Testis (tissue), 5 donors: ENCODE measurements at regions of chr14 and their contacts with region 1.

Region 1: DNA sequence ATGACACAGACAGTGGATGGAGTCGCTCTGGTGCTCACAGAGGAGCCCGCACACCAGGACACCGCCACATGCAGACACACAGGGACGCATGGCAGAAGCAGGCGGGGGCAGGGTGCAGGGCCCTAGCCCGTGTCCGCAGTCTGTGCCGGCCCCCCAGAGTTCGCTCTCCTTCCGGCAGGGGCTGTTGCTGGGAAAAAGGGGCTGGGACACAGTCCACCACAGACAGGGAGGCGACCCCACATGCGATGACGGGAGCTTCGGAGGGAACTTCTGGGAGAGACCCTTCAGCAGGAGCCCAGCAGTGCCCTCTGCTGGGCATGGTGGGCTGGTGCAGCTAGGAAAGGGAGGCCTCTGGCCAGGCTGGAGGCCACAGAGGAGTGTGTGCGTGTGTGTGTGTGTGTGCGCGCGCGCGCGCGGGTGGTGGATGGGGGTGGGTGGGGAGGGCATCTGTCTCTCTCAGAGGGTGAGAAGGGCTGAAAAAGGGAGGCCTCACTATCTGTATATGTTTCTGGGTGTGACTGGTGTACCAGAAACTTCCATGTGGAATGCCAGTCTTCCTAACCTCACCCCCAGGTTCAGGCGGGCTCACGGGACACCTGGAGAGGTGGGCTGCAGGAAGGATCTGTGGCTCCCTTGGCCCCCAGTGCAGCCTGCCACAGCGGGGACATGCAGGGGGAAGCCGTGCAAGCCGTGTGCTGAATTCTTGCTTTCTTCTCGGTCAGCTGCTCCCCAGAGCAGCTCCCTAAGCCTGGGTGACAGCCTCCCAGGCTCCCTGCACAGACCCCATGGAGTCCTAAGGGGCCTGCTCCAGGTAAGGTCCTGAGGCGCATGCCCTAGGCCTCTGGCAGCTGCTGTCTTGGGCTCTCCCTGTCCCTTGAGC is 60.7 kb downstream of the PLEKHG3 start:
- DNase-seq: peak; percentile 79
- H3K4me3 ChIP-seq: no peak overlapping the region
- H3K27ac ChIP-seq: no peak overlapping the region
- H3K4me1 ChIP-seq: peaks cover 36% of the 10 kb centered on the region
- H3K27me3 ChIP-seq: no peaks in the 10 kb centered on the region
- CTCF ChIP-seq: peak; percentile 85 to 94 (median 86)
- POLR2A ChIP-seq: no peak

Region 2: GRCh38 chr14:64671591-64671990 is 93.3 kb before region 1 on chr14:
- intact Hi-C with region 1: loop called (anchors 5 kb)
- DNase-seq: no peak
- H3K4me3 ChIP-seq: no peak overlapping the region
- H3K27ac ChIP-seq: no peak overlapping the region
- H3K4me1 ChIP-seq: no peaks in the 10 kb centered on the region
- H3K27me3 ChIP-seq: no peaks in the 10 kb centered on the region
- CTCF ChIP-seq: peak; percentile 52 to 74 (median 73)
- POLR2A ChIP-seq: no peak

Region 3: GRCh38 chr14:65095619-65096205 is 330.8 kb after region 1 on chr14:
- intact Hi-C with region 1: loop called (anchors 10 kb)
- DNase-seq: peak; percentile 58
- H3K4me3 ChIP-seq: no peak overlapping the region
- H3K27ac ChIP-seq: peak overlapping the region in 1 of 2 donors; percentile 60
- H3K4me1 ChIP-seq: peaks cover 26% of the 10 kb centered on the region
- H3K27me3 ChIP-seq: no peaks in the 10 kb centered on the region
- CTCF ChIP-seq: no peak
- POLR2A ChIP-seq: no peak